Panc1 (cell line): ENCODE measurements at regions of chr9 and their contacts with region 1.

Region 1: DNA sequence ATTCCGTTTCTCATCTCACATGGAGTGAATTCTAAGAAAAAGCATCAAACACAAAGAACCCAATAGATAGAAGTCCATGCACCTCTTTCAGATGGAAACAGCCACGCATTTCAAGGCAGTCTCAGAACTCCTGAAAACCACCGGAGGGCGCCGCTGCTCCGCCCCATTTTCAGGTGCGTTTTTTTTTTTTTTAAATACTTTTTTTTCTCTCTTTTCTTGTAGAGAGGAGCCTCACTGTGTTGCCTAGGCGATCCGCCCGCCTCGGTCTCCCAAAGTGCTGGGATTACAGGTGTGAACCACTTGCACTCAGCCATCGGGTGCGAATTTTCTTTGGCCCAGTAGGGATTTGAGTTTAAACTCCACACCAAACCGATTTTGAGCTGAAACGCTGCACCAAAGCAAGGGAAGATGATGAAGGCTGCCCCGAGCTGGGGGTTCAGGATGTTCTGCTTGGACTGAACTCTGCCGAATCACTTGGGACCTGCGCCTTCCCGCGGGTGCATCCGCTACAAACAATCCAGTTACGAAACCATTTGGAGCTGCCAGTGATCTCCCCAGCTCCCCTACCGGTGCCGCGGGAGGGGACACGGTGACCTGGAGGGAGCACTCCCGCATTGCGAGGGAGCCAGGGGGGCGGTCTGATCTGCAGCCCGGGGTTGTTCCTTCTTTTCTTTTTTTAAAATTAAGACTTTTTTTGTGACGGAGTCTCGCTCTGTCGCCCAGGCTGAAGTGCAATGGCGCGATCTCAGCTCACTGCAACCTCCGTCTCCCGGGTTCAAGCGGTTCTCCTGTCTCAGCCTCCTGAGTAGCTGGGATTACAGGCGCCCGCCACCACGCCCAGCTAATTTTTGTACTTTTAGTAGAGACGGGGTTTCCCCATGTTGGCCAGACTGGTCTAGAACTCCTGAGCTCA is 1.4 kb downstream of the PTGR1 start:
- DNase-seq: no peak
- ATAC-seq: peak; percentile 60
- H3K4me3 ChIP-seq: peak overlapping the region; percentile 69 to 86
- H3K27ac ChIP-seq: peak overlapping the region; percentile 81
- H3K4me1 ChIP-seq: no peaks in the 10 kb centered on the region
- H3K27me3 ChIP-seq: no peaks in the 10 kb centered on the region
- CTCF ChIP-seq: peak; percentile 89

Region 2: GRCh38 chr9:111232997-111233790 is 364.9 kb before region 1 on chr9:
- CTCF ChIA-PET with region 1: interaction called, 13 read pairs
- POLR2A ChIA-PET with region 1: no interaction called
- in situ Hi-C with region 1: no loop called
- intact Hi-C with region 1: no loop called
- DNase-seq: no peak
- ATAC-seq: no peak
- H3K4me3 ChIP-seq: no peak overlapping the region
- H3K27ac ChIP-seq: no peak overlapping the region
- H3K4me1 ChIP-seq: no peaks in the 10 kb centered on the region
- H3K27me3 ChIP-seq: no peaks in the 10 kb centered on the region
- CTCF ChIP-seq: no peak

Region 3: DNA sequence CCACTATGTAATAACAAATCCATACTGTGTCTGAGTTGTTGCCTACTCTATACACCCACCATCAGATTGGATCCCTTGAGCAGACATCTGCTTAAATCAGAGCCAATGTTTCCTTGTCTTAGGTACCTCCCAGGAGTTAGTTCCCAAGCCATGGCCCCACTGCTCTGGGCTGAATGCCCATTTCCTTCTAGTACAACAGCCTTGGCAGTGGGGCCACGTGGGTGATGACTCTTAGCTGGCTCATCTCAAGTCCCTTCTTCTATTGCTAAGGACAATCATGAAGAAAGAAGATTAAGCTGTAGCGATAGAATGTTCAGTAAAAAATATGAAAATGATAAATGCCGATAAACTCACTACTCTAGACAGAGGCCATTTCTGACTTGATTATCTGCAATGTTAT is 15.2 kb before region 1 on chr9:
- CTCF ChIA-PET with region 1: no interaction called
- POLR2A ChIA-PET with region 1: interaction called, 10 read pairs
- in situ Hi-C with region 1: no loop called
- intact Hi-C with region 1: no loop called
- DNase-seq: no peak
- ATAC-seq: no peak
- H3K4me3 ChIP-seq: no peak overlapping the region
- H3K27ac ChIP-seq: no peak overlapping the region
- H3K4me1 ChIP-seq: no peaks in the 10 kb centered on the region
- H3K27me3 ChIP-seq: no peaks in the 10 kb centered on the region
- CTCF ChIP-seq: no peak

Region 4: DNA sequence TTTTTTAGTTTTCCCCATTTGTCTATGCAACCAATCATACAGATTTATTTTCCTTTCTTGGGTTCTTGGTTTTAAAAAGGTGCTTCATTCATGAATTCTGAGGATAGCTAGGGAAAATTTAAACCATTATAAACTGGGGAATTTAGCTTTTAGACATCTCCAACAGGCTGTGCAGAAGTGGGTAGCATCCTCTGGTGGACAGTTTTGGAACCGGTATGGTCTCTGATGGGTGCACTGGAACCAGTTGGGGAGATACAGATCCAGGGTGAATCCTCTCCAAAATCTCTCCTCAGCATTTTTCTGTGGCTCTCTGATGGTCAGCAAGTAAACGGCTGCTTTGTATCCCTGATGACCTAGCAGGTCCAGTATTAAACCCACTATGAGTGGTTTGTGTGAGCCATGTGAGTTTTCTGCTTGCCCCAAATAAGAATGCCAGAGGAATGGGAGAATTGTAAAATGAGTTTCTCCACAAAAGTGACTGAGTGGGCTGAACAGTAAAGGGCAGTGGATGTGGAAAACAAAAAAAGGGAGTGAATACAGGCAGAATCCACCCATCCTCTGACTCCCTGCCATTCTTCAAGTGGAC is 23.9 kb after region 1 on chr9:
- CTCF ChIA-PET with region 1: interaction called, 28 read pairs
- POLR2A ChIA-PET with region 1: interaction called, 12 read pairs
- in situ Hi-C with region 1: no loop called
- intact Hi-C with region 1: no loop called
- DNase-seq: peak; percentile 51
- ATAC-seq: peak; percentile 93
- H3K4me3 ChIP-seq: no peak overlapping the region
- H3K27ac ChIP-seq: no peak overlapping the region
- H3K4me1 ChIP-seq: no peaks in the 10 kb centered on the region
- H3K27me3 ChIP-seq: no peaks in the 10 kb centered on the region
- CTCF ChIP-seq: peak; percentile 94

Region 5: DNA sequence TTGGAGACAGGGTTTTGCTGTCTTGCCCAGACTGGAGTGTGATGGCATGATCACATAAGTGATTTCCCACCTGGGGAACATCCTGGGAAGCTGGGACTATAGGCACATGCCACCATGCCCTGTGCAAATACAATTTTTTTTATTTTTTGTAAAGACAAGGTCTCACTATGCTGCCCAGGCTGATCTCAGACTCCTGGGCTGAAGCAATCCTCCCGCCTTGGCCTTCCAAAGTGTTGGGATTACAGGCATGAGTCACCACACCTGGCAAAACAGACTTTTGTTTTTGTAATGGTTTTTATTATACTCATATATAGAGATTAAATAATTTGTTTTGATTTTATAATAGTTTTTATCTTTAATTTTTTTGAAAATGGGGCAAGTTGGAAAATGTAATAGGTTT is 47.7 kb after region 1 on chr9:
- CTCF ChIA-PET with region 1: no interaction called
- POLR2A ChIA-PET with region 1: no interaction called
- in situ Hi-C with region 1: no loop called
- intact Hi-C with region 1: no loop called
- DNase-seq: no peak
- ATAC-seq: no peak
- H3K4me3 ChIP-seq: no peak overlapping the region
- H3K27ac ChIP-seq: no peak overlapping the region
- H3K4me1 ChIP-seq: no peaks in the 10 kb centered on the region
- H3K27me3 ChIP-seq: no peaks in the 10 kb centered on the region
- CTCF ChIP-seq: no peak

Region 6: GRCh38 chr9:111691672-111692329 is 93.7 kb after region 1 on chr9:
- CTCF ChIA-PET with region 1: interaction called, 8 read pairs
- POLR2A ChIA-PET with region 1: interaction called, 13 read pairs
- in situ Hi-C with region 1: no loop called
- intact Hi-C with region 1: loop called (anchors 1 kb)
- DNase-seq: peak; percentile 25
- ATAC-seq: peak; percentile 83
- H3K4me3 ChIP-seq: no peak overlapping the region
- H3K27ac ChIP-seq: peak overlapping the region; percentile 65
- H3K4me1 ChIP-seq: peaks cover 9% of the 10 kb centered on the region; the same call in 1 of the 2 replicates
- H3K27me3 ChIP-seq: no peaks in the 10 kb centered on the region
- CTCF ChIP-seq: peak; percentile 51; the same call in 1 of the 2 replicates